ENCODE measurements at regions of chr17 and their contacts with region 1.

Region 1: GRCh38 chr17:73192894-73193701 is at the start of gene COG1:
- DNase-seq: peak; percentile 86
- H3K4me3 ChIP-seq: peak within 1 kb of the TSS; percentile 73 to 96 (median 80)
- H3K27ac ChIP-seq: peak within 1 kb of the TSS; percentile 57
- H3K4me1 ChIP-seq: peaks cover 4% of the 10 kb centered on the region
- H3K27me3 ChIP-seq: no peaks in the 10 kb centered on the region
- CTCF ChIP-seq: no peak
- total RNA-seq, gene COG1: 23.3 to 35.2 TPM

Region 2: GRCh38 chr17:72985881-72986720 is 207.0 kb before region 1 on chr17:
- CTCF ChIA-PET with region 1: interaction called, 5 read pairs
- dilution Hi-C with region 1: no loop called
- in situ Hi-C with region 1: no loop called
- intact Hi-C with region 1: loop called (anchors 1 kb)
- DNase-seq: peak; percentile 58
- H3K4me3 ChIP-seq: no peak overlapping the region
- H3K27ac ChIP-seq: no peak overlapping the region
- H3K4me1 ChIP-seq: peaks cover 9% of the 10 kb centered on the region
- H3K27me3 ChIP-seq: no peaks in the 10 kb centered on the region
- CTCF ChIP-seq: peak; percentile 86 to 92

Region 3: GRCh38 chr17:73231841-73232586 is 38.9 kb after region 1 on chr17:
- CTCF ChIA-PET with region 1: interaction called, 5 read pairs
- dilution Hi-C with region 1: no loop called
- in situ Hi-C with region 1: no loop called
- intact Hi-C with region 1: loop called (anchors 1 kb)
- DNase-seq: peak; percentile 90
- H3K4me3 ChIP-seq: peak overlapping the region; percentile 95 to 100 (median 99)
- H3K27ac ChIP-seq: peak overlapping the region; percentile 72
- H3K4me1 ChIP-seq: peaks cover 37% of the 10 kb centered on the region
- H3K27me3 ChIP-seq: no peaks in the 10 kb centered on the region
- CTCF ChIP-seq: peak in 1 of 2 donors; percentile 25

Region 4: GRCh38 chr17:73247726-73248125 is 54.6 kb after region 1 on chr17:
- CTCF ChIA-PET with region 1: no interaction called
- dilution Hi-C with region 1: no loop called
- in situ Hi-C with region 1: no loop called
- intact Hi-C with region 1: loop called (anchors 1 kb)
- DNase-seq: no peak
- H3K4me3 ChIP-seq: no peak overlapping the region
- H3K27ac ChIP-seq: no peak overlapping the region
- H3K4me1 ChIP-seq: peaks cover 2% of the 10 kb centered on the region
- H3K27me3 ChIP-seq: no peaks in the 10 kb centered on the region
- CTCF ChIP-seq: peak in 1 of 2 donors; percentile 34

Region 5: GRCh38 chr17:73371285-73371684 is 178.2 kb after region 1 on chr17:
- CTCF ChIA-PET with region 1: interaction called, 3 read pairs
- dilution Hi-C with region 1: no loop called
- in situ Hi-C with region 1: no loop called
- intact Hi-C with region 1: loop called (anchors 1 kb)
- DNase-seq: peak; percentile 71
- H3K4me3 ChIP-seq: no peak overlapping the region
- H3K27ac ChIP-seq: no peak overlapping the region
- H3K4me1 ChIP-seq: peaks cover 6% of the 10 kb centered on the region
- H3K27me3 ChIP-seq: no peaks in the 10 kb centered on the region
- CTCF ChIP-seq: no peak

Measured in mammary epithelial cell (primary cell).